Aorta (tissue), 5 donors: ENCODE measurements at regions of chr3 and their contacts with region 1.

Region 1: GRCh38 chr3:43690400-43691119 is at the start of gene ABHD5:
- DNase-seq: peak; percentile 93 to 96
- ATAC-seq: peak; percentile 97
- H3K4me3 ChIP-seq: peak within 1 kb of the TSS; percentile 84
- H3K27ac ChIP-seq: peak within 1 kb of the TSS in 1 of 2 donors; percentile 48
- H3K4me1 ChIP-seq: no peaks in the 10 kb centered on the region
- H3K27me3 ChIP-seq: no peaks in the 10 kb centered on the region
- total RNA-seq, gene ABHD5: 16.2 to 28.8 TPM

Region 2: GRCh38 chr3:43559963-43560362 is 130.6 kb before region 1 on chr3:
- intact Hi-C with region 1: loop called in 1 of 2 experiments (anchors 10 kb)
- DNase-seq: no peak
- ATAC-seq: no peak
- H3K4me3 ChIP-seq: no peak overlapping the region
- H3K27ac ChIP-seq: no peak overlapping the region
- H3K4me1 ChIP-seq: no peaks in the 10 kb centered on the region
- H3K27me3 ChIP-seq: no peaks in the 10 kb centered on the region

Region 3: GRCh38 chr3:43621656-43622432 is 68.7 kb before region 1 on chr3 and contains the start of gene ANO10:
- intact Hi-C with region 1: loop called (anchors 2 to 5 kb)
- DNase-seq: peak; percentile 99 to 100
- ATAC-seq: peak; percentile 100
- H3K4me3 ChIP-seq: peak within 1 kb of the TSS; percentile 75 to 76
- H3K27ac ChIP-seq: peak within 1 kb of the TSS; percentile 90 to 94
- H3K4me1 ChIP-seq: peaks cover 0 to 2% of the 10 kb centered on the region in 2 donors
- H3K27me3 ChIP-seq: no peaks in the 10 kb centered on the region
- total RNA-seq, gene ANO10: 42.6 to 46.8 TPM

Region 4: DNA sequence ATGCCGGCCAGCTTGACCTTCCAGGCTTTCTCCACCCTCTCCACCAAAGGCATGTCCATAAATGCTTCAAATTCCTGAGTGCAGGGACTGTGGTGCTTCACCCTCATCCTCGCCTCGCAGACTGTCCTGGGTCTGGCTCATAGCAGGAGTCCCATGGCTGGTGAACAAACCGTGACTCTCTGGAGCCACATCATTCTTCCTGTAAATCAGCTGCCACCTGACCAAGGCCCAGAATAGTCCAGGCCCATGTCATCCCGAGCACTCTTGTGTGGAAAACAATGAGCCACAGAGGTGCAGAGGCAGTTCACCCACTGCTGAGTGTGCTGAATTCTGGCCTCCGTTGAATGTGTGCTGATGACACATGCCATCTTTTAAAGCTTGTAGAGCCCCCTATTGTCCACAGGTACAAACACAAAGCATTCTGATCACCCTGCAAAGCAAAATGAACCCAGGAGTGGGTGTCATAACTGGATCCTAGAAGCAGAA is 68.8 kb after region 1 on chr3:
- intact Hi-C with region 1: loop called in 1 of 2 experiments (anchors 5 kb)
- DNase-seq: no peak
- ATAC-seq: no peak
- H3K4me3 ChIP-seq: no peak overlapping the region
- H3K27ac ChIP-seq: no peak overlapping the region
- H3K4me1 ChIP-seq: no peaks in the 10 kb centered on the region
- H3K27me3 ChIP-seq: no peaks in the 10 kb centered on the region

Region 5: DNA sequence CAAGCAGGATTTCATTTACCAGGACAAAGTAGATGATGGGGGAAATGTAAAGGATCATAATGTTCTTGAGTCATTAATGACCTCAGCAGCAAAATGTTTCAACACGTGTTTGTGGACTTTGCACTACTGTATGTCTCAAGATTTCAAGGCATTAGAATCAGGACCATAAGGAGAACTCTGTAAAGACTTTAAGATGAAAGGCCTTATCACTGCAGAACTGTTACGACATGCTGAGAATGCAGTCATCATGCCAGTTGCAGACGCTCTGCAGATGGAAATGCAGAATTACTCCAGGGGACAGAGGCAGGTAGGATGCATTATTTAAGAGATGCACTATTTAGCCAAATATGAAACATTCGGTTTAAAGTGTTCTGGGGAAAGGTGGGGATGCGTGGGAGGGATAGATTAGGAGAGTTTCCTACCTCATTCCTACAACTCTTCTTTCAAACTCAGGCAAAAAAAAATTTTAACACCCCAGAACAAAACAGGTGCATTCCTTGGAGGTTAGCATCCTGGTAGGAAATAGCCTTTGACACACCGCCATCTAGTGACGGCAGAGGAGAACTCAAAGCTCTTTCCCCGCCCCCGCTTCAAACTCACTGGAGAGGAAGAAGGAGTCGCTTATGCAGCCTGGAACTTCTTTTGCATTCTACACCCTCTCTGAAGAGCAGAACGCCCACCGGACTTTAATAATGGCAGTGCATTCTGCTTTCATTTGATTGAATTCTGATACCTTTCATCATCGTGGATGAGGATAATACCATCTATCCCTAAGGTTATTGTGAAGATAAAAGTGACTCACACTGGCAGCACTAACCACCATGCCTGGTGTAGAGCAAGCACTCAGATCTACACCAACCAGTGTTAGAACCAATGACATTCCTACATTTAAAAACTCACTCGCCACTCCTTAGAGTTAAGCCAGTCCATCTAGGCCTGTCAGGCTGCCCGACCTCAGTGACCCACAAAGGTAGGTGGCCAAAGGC is 508.0 kb after region 1 on chr3:
- intact Hi-C with region 1: loop called in 1 of 2 experiments (anchors 10 kb)
- DNase-seq: peak in 1 of 2 donors; percentile 68
- ATAC-seq: peak; percentile 88
- H3K4me3 ChIP-seq: no peak overlapping the region
- H3K27ac ChIP-seq: no peak overlapping the region
- H3K4me1 ChIP-seq: no peaks in the 10 kb centered on the region
- H3K27me3 ChIP-seq: no peaks in the 10 kb centered on the region